ENCODE measurements at regions of chr16 and their contacts with region 1.

Region 1: GRCh38 chr16:10485698-10486382 is 94.6 kb downstream of the EMP2 start:
- DNase-seq: no peak
- ATAC-seq: no peak
- H3K4me3 ChIP-seq: no peak overlapping the region
- H3K4me3 Mint-ChIP-seq: no peak overlapping the region
- H3K27ac ChIP-seq: no peak overlapping the region
- H3K27ac Mint-ChIP-seq: no peak overlapping the region
- H3K4me1 ChIP-seq: no peaks in the 10 kb centered on the region
- H3K4me1 Mint-ChIP-seq: no peaks in the 10 kb centered on the region
- H3K27me3 ChIP-seq: no peaks in the 10 kb centered on the region
- H3K27me3 Mint-ChIP-seq: no peaks in the 10 kb centered on the region
- CTCF ChIP-seq: no peak

Region 2: GRCh38 chr16:10218490-10219206 is 267.2 kb before region 1 on chr16:
- CTCF ChIA-PET with region 1: no interaction called
- POLR2A ChIA-PET with region 1: no interaction called
- intact Hi-C with region 1: no loop called
- DNase-seq: no peak
- ATAC-seq: no peak
- H3K4me3 ChIP-seq: no peak overlapping the region
- H3K4me3 Mint-ChIP-seq: no peak overlapping the region
- H3K27ac ChIP-seq: no peak overlapping the region
- H3K27ac Mint-ChIP-seq: no peak overlapping the region
- H3K4me1 ChIP-seq: no peaks in the 10 kb centered on the region
- H3K4me1 Mint-ChIP-seq: no peaks in the 10 kb centered on the region
- H3K27me3 ChIP-seq: no peaks in the 10 kb centered on the region
- H3K27me3 Mint-ChIP-seq: peaks cover 9% of the 10 kb centered on the region
- CTCF ChIP-seq: no peak

Region 3: DNA sequence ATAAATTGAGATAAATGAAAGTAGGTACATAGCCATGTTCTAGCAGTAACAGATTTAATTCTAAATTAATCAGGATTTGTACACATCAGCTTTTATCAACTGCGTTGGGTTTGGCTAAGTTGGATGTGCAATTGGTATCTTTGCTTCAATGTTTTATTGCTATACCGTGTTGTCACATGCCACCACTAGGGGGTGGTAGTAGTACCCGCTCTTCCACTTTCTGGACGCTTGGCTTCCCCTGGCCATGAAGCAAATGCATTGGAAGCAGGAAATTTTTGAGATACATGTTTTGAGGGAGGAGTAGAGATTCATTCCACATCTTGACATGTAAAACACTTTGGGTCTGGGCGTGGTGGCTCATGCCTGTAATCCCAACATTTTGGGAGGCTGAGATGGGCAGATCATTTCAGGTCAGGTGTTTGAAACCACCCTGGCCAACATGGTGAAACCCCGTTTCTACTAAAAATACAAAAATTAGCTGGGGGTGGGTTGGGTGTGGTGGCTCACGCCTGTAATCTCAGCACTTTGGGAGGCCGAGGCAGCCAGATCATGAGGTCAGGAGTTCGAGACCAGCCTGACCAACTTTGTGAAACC is 35.9 kb after region 1 on chr16:
- CTCF ChIA-PET with region 1: no interaction called
- POLR2A ChIA-PET with region 1: no interaction called
- intact Hi-C with region 1: no loop called
- DNase-seq: peak in 7 of 9 experiments; percentile 7 to 68 (median 44)
- ATAC-seq: peak; percentile 46
- H3K4me3 ChIP-seq: no peak overlapping the region
- H3K4me3 Mint-ChIP-seq: no peak overlapping the region
- H3K27ac ChIP-seq: no peak overlapping the region
- H3K27ac Mint-ChIP-seq: no peak overlapping the region
- H3K4me1 ChIP-seq: no peaks in the 10 kb centered on the region
- H3K4me1 Mint-ChIP-seq: peaks cover 2% of the 10 kb centered on the region
- H3K27me3 ChIP-seq: peaks cover 0 to 3% of the 10 kb centered on the region in 2 experiments
- H3K27me3 Mint-ChIP-seq: peaks cover 11% of the 10 kb centered on the region
- CTCF ChIP-seq: peak; percentile 63

Region 4: GRCh38 chr16:10561001-10561400 is 75.2 kb after region 1 on chr16:
- CTCF ChIA-PET with region 1: no interaction called
- POLR2A ChIA-PET with region 1: no interaction called
- intact Hi-C with region 1: loop called in 1 of 2 experiments (anchors 2 kb)
- DNase-seq: no peak
- ATAC-seq: no peak
- H3K4me3 ChIP-seq: no peak overlapping the region
- H3K4me3 Mint-ChIP-seq: no peak overlapping the region
- H3K27ac ChIP-seq: no peak overlapping the region
- H3K27ac Mint-ChIP-seq: no peak overlapping the region
- H3K4me1 ChIP-seq: no peaks in the 10 kb centered on the region
- H3K4me1 Mint-ChIP-seq: no peaks in the 10 kb centered on the region
- H3K27me3 ChIP-seq: no peaks in the 10 kb centered on the region
- H3K27me3 Mint-ChIP-seq: peaks cover 15% of the 10 kb centered on the region
- CTCF ChIP-seq: no peak